ENCODE measurements at regions of chr5 and their contacts with region 1.

Region 1: DNA sequence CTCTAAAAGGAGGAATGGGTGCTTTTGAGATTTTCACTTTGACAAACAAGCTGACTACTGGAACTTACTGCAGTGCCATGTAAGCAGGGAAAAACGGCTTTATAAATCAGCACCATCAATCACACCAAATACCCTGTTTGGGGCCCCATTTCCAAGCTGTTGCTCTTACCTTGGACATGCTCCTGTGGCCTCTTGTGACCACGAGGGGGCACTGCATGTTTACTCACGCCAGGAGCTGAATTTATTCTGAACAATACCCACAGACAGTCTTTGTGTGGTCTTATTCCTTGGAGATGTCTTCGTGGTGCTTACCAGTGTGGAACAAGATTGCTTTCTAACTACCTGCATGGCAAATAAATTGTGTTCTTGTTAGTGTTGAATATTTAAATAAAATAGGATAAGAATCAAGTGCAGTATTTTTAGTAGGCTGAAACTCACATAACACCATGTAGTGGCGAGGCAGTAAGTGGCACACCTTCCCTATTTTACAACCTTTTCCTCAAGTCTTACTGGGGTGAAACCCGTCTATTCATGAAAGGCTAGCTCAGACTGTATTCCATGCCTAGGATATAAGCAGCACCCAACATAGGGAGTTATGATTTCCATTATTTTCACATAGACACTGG is 155.5 kb upstream of the NMUR2 start:
- DNase-seq: peak; percentile 59
- H3K4me3 ChIP-seq: no peak overlapping the region
- CTCF ChIP-seq: peak; percentile 93

Region 2: DNA sequence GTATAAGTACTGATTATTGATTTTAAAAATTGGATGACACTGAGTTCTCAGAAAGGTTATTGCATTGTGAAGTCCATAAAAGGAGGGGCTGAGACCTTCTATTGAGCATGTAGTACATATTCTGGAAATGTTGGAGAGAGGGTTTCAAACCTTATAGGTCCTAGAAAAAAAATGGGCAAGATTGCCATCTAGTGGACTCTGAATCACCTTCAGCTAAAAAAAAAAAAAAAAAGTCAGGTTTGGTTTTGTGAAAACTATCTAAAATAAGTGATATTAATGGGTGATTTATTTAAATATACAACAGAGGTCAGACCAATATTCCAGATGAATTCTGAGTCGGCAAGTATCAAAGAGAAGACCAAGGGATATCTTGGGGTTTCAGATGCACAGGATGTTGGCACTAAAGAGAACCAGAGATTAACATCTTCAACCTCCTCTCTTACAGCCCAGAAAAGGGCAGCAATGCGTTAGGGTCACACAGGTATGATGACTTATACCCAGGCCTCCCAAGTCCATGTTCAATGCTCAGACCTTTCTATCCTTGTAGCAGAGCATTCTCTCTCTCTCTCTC is 45.7 kb before region 1 on chr5:
- in situ Hi-C with region 1: no loop called
- DNase-seq: peak; percentile 9
- H3K4me3 ChIP-seq: no peak overlapping the region
- CTCF ChIP-seq: peak; percentile 46

Region 3: DNA sequence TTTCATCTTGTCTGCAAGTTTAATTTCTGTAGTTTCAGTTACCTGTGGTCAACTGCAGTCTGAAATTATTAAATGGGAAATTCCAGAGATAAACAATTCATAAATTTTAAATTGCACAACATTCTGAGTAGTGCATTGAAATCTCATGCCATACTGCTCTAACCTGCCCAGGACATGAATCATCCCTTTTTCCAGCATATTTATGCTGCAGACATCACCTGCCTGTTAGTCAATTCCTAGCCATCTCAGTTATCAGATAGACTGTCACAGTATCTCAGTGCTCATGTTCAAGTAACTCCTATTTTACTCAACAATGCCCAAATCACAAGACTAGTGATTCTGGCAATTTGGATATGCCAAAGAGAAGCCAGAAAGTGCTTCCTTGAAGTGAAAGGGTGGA is 706.9 kb after region 1 on chr5:
- in situ Hi-C with region 1: loop called (anchors 25 kb)
- DNase-seq: no peak
- H3K4me3 ChIP-seq: no peak overlapping the region
- CTCF ChIP-seq: no peak

Measured in astrocyte of the cerebellum (primary cell).